Ovary (tissue), 10 donors: ENCODE measurements at regions of chr3 and their contacts with region 1.

Region 1: DNA sequence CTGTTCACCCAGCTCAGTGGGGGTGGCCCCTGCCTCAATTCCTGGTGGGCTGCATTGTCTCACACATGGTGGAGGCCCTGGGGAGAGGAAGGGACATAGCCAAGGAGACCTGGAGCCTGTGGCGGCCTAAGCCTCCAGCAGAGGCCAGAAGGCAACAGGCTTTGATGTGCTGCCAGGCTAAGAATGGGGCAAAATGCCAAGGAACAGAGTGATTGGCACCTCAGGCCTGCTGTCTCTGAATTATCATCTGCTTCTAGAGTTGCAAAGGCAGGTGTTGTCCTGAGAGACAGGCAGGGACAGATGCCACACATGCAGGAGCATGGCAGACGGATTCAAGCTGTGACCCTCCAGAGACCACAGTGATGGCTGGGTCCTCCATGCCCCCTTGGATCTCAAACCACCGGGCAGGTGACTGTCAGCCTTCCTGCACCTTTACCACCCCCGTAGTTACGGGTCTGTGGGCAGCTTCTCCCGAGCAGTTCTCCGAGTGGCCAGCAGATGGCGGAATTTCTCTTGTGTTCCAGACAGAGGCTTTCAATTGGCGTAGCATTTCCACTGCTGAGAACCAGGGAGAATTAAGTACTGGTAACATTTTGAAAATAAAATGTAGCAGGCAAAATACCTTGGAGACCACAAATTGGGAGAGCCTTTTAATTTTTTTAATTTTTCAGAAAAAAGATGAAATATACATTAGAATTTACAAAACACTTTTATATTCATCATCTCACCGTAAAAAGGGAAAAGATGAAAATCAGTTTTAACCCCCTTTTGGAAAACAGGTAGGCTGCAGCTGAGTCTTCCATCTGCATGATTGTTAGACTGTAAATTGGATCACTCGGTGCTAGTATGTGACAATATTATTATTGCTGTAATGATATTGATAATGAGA is 525.5 kb upstream of the CFAP20DC start:
- DNase-seq: peak; percentile 45 to 85 (median 76)
- H3K4me3 ChIP-seq: no peak overlapping the region
- H3K27ac ChIP-seq: no peak overlapping the region
- H3K4me1 ChIP-seq: no peaks in the 10 kb centered on the region
- H3K27me3 ChIP-seq: no peaks in the 10 kb centered on the region
- CTCF ChIP-seq: peak; percentile 28 to 69 (median 52)
- EP300 ChIP-seq: no peak
- POLR2A ChIP-seq: no peak

Region 2: DNA sequence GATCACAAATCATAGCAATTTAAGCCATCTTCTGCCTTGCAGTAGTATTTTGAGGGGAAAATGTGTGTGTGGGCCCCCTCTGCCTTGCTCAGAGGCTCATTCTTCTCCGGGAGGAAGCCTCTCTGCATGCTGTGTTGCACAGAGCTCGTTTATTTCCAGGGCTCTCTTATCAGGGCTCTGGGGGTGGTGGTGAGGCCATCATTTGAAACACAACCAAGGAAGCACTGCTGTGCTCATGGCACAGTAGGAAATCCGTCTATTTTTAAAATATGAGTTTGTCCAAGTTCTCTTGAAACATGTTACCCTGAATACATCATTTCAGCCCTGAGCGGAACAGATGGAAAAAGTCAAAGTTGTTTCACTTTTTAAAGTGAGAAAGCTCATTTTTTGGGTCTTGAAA is 156.5 kb before region 1 on chr3:
- intact Hi-C with region 1: no loop called
- DNase-seq: no peak
- H3K4me3 ChIP-seq: no peak overlapping the region
- H3K27ac ChIP-seq: no peak overlapping the region
- H3K4me1 ChIP-seq: no peaks in the 10 kb centered on the region
- H3K27me3 ChIP-seq: no peaks in the 10 kb centered on the region
- CTCF ChIP-seq: no peak
- EP300 ChIP-seq: no peak
- POLR2A ChIP-seq: no peak

Region 3: GRCh38 chr3:59857589-59858346 is 282.4 kb after region 1 on chr3:
- intact Hi-C with region 1: loop called in 1 of 4 experiments (anchors 10 kb)
- DNase-seq: peak; percentile 24 to 80 (median 51)
- H3K4me3 ChIP-seq: no peak overlapping the region
- H3K27ac ChIP-seq: no peak overlapping the region
- H3K4me1 ChIP-seq: no peaks in the 10 kb centered on the region
- H3K27me3 ChIP-seq: no peaks in the 10 kb centered on the region
- CTCF ChIP-seq: peak in 2 of 3 donors; percentile 12 to 37
- EP300 ChIP-seq: no peak
- POLR2A ChIP-seq: no peak